Vagina (tissue), 2 donors: ENCODE measurements at regions of chr15 and their contacts with region 1.

Region 1: GRCh38 chr15:77059786-77060361 is 11.0 kb downstream of the TSPAN3 start:
- DNase-seq: no peak
- H3K4me3 ChIP-seq: no peak overlapping the region
- H3K27ac ChIP-seq: no peak overlapping the region
- H3K4me1 ChIP-seq: peaks cover 39% of the 10 kb centered on the region
- H3K27me3 ChIP-seq: no peaks in the 10 kb centered on the region
- CTCF ChIP-seq: no peak
- POLR2A ChIP-seq: no peak

Region 2: GRCh38 chr15:75723847-75724660 is 1335.8 kb before region 1 on chr15:
- intact Hi-C with region 1: loop called (anchors 10 kb)
- DNase-seq: no peak
- H3K4me3 ChIP-seq: no peak overlapping the region
- H3K27ac ChIP-seq: no peak overlapping the region
- H3K4me1 ChIP-seq: peaks cover 19% of the 10 kb centered on the region
- H3K27me3 ChIP-seq: no peaks in the 10 kb centered on the region
- CTCF ChIP-seq: no peak
- POLR2A ChIP-seq: no peak